GM13976 (cell line): ENCODE measurements at regions of chr9 and their contacts with region 1.

Region 1: GRCh38 chr9:17810728-17811571 is 232.1 kb downstream of the SH3GL2 start:
- DNase-seq: peak; percentile 45
- CTCF ChIP-seq: peak; percentile 69

Region 2: GRCh38 chr9:17531642-17532254 is 279.2 kb before region 1 on chr9:
- in situ Hi-C with region 1: loop called (anchors 25 kb)
- DNase-seq: peak; percentile 52
- CTCF ChIP-seq: peak; percentile 20

Region 3: DNA sequence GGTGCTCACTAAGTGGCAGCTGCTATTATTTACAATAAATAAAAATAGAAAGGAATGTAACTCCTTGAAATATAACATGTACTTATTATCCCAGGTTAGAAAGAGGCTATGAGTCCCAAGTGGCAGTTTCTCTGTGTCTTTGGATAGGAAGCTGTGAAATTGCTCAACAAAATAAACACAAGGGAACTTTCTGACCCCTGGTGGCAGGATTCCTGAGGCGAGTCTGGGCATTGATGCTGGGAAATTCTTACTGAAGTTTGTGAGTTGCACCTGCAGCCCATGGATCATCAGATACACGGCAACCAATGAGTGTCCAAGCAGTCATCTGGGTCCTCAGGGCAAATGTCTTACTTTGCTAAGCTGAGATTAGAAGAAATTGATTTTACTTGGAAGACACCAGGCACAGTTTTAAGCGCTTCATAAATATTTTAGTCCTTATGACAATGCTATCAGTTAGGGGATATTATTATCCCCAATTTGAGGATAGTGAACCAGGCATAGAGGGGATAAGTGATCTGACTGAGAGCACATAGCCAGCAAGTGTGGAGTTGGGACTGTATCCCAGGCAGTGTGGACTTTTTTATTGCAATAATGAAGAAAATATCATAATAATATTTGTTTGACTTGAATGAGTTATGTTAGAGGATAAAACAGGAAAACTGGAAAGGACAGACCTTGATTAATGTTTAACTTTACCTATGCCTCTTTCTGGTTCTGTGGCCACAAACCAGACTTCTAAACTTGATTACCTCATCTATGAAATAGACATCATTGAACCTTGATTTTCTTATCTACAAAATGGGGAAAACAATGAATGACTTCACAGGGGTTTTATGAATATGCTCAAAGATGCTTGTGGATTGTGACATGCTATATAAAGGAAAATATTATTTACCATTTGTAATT is 397.5 kb after region 1 on chr9:
- in situ Hi-C with region 1: loop called (anchors 25 kb)
- DNase-seq: no peak
- CTCF ChIP-seq: no peak